AG04449 (cell line): ENCODE measurements at regions of chr10 and their contacts with region 1.

Region 1: GRCh38 chr10:121596689-121597503 is 1.3 kb downstream of the FGFR2 start:
- DNase-seq: no peak
- H3K4me3 ChIP-seq: peak overlapping the region; percentile 54
- CTCF ChIP-seq: peak; percentile 9

Region 2: GRCh38 chr10:121608469-121609190 is 11.7 kb after region 1 on chr10:
- CTCF ChIA-PET with region 1: interaction called, 12 read pairs
- POLR2A ChIA-PET with region 1: no interaction called
- DNase-seq: no peak
- H3K4me3 ChIP-seq: peak overlapping the region; percentile 40
- CTCF ChIP-seq: peak; percentile 63